ENCODE measurements at regions of chr12 and their contacts with region 1.

Region 1: GRCh38 chr12:105420659-105421240 is 90.3 kb downstream of the C12orf75 start:
- DNase-seq: no peak
- ATAC-seq: peak; percentile 93
- H3K4me3 ChIP-seq: no peak overlapping the region
- H3K27ac ChIP-seq: no peak overlapping the region
- H3K4me1 ChIP-seq: no peaks in the 10 kb centered on the region
- H3K27me3 ChIP-seq: no peaks in the 10 kb centered on the region
- CTCF ChIP-seq: peak; percentile 94

Region 2: DNA sequence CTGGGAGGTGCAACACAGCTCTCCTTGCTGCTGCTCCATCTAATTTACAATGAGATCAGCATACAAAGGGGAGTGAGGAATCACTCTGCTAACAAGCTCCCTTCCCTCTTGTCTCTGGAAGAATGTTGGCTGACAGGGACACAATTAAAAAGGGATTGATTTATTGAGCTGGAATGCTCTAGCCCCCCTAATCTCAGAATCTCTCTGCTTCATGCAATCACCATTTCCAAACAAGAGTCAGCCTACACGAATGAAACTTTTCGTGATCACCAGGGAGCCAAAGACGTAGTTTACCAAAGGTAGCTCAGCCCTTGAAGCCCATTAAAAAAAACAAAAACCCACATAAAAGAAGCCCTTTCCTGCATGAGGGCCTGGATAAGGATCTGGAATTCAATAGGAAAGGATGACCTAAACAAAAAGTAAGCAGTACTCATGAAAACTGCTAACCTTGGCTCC is 133.5 kb after region 1 on chr12:
- intact Hi-C with region 1: no loop called
- DNase-seq: no peak
- ATAC-seq: no peak
- H3K4me3 ChIP-seq: no peak overlapping the region
- H3K27ac ChIP-seq: no peak overlapping the region
- H3K4me1 ChIP-seq: no peaks in the 10 kb centered on the region
- H3K27me3 ChIP-seq: no peaks in the 10 kb centered on the region
- CTCF ChIP-seq: no peak

Region 3: GRCh38 chr12:106136263-106136662 is 715.5 kb after region 1 on chr12:
- intact Hi-C with region 1: loop called (anchors 10 kb)
- DNase-seq: peak; percentile 91
- ATAC-seq: peak; percentile 53
- H3K4me3 ChIP-seq: peak overlapping the region; percentile 66
- H3K27ac ChIP-seq: peak overlapping the region; percentile 83
- H3K4me1 ChIP-seq: peaks cover 35% of the 10 kb centered on the region
- H3K27me3 ChIP-seq: peaks cover 12% of the 10 kb centered on the region
- CTCF ChIP-seq: peak; percentile 89